PC-9 (cell line): ENCODE measurements at regions of chr2 and their contacts with region 1.

Region 1: GRCh38 chr2:55555977-55556376 is 36.5 kb downstream of the CFAP36 start:
- DNase-seq: peak in 1 of 2 experiments; percentile 85
- H3K4me3 ChIP-seq: no peak overlapping the region
- H3K27ac ChIP-seq: peak overlapping the region; percentile 49
- H3K4me1 ChIP-seq: peaks cover 19% of the 10 kb centered on the region
- H3K27me3 ChIP-seq: no peaks in the 10 kb centered on the region
- CTCF ChIP-seq: no peak

Region 2: GRCh38 chr2:55395724-55396605 is 160.0 kb before region 1 on chr2:
- CTCF ChIA-PET with region 1: no interaction called
- POLR2A ChIA-PET with region 1: interaction called, 16 read pairs
- intact Hi-C with region 1: no loop called
- DNase-seq: no peak
- H3K4me3 ChIP-seq: no peak overlapping the region
- H3K27ac ChIP-seq: no peak overlapping the region
- H3K4me1 ChIP-seq: no peaks in the 10 kb centered on the region
- H3K27me3 ChIP-seq: no peaks in the 10 kb centered on the region
- CTCF ChIP-seq: no peak

Region 3: GRCh38 chr2:55649211-55649610 is 93.2 kb after region 1 on chr2:
- CTCF ChIA-PET with region 1: no interaction called
- POLR2A ChIA-PET with region 1: no interaction called
- intact Hi-C with region 1: no loop called
- DNase-seq: no peak
- H3K4me3 ChIP-seq: no peak overlapping the region
- H3K27ac ChIP-seq: no peak overlapping the region
- H3K4me1 ChIP-seq: no peaks in the 10 kb centered on the region
- H3K27me3 ChIP-seq: no peaks in the 10 kb centered on the region
- CTCF ChIP-seq: no peak

Region 4: DNA sequence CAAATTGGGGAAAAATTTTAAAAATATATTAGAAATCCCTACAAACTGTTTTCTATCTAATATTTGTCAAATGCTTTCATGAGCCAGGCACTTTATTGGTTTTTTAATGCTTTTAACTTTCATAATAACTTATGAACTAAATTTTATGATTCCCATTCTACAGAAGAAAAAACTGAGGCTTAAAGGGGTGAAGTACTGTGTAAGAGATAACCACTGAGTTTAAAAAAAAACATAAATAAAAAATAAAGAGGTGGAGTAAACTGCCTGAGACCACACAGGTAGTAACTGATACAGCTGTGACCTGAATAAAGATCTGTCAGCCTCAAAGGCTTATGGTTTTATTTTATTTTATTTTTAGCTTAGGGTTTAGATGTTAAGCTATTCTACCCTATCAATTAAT is 113.0 kb after region 1 on chr2:
- CTCF ChIA-PET with region 1: no interaction called
- POLR2A ChIA-PET with region 1: no interaction called
- intact Hi-C with region 1: no loop called
- DNase-seq: no peak
- H3K4me3 ChIP-seq: no peak overlapping the region
- H3K27ac ChIP-seq: no peak overlapping the region
- H3K4me1 ChIP-seq: no peaks in the 10 kb centered on the region
- H3K27me3 ChIP-seq: no peaks in the 10 kb centered on the region
- CTCF ChIP-seq: no peak